IMR-90 (cell line): ENCODE measurements at regions of chr3 and their contacts with region 1.

Region 1: GRCh38 chr3:73255609-73256029 is 194.2 kb downstream of the EBLN2 start:
- DNase-seq: peak; percentile 66
- ATAC-seq: no peak
- H3K4me3 ChIP-seq: no peak overlapping the region
- H3K27ac ChIP-seq: no peak overlapping the region
- H3K4me1 ChIP-seq: no peaks in the 10 kb centered on the region
- H3K27me3 ChIP-seq: peaks cover 2% of the 10 kb centered on the region; the same call in 1 of the 2 replicates
- CTCF ChIP-seq: no peak
- POLR2A ChIP-seq: no peak
- RAD21 ChIP-seq: no peak

Region 2: GRCh38 chr3:72847751-72848702 is 407.6 kb before region 1 on chr3 and contains the start of gene SHQ1:
- CTCF ChIA-PET with region 1: no interaction called
- POLR2A ChIA-PET with region 1: no interaction called
- dilution Hi-C with region 1: no loop called
- in situ Hi-C with region 1: no loop called
- intact Hi-C with region 1: no loop called
- DNase-seq: peak; percentile 93
- ATAC-seq: peak; percentile 88
- H3K4me3 ChIP-seq: peak within 1 kb of the TSS; percentile 90
- H3K27ac ChIP-seq: peak within 1 kb of the TSS; percentile 65
- H3K4me1 ChIP-seq: no peaks in the 10 kb centered on the region; the same call in 1 of the 2 replicates
- H3K27me3 ChIP-seq: no peaks in the 10 kb centered on the region
- CTCF ChIP-seq: no peak
- POLR2A ChIP-seq: peak; percentile 31; the same call in 1 of the 2 replicates
- RAD21 ChIP-seq: no peak; the same call in 1 of the 2 replicates
- total RNA-seq, gene SHQ1: 19.4 and 28.6 TPM in 2 replicates

Region 3: DNA sequence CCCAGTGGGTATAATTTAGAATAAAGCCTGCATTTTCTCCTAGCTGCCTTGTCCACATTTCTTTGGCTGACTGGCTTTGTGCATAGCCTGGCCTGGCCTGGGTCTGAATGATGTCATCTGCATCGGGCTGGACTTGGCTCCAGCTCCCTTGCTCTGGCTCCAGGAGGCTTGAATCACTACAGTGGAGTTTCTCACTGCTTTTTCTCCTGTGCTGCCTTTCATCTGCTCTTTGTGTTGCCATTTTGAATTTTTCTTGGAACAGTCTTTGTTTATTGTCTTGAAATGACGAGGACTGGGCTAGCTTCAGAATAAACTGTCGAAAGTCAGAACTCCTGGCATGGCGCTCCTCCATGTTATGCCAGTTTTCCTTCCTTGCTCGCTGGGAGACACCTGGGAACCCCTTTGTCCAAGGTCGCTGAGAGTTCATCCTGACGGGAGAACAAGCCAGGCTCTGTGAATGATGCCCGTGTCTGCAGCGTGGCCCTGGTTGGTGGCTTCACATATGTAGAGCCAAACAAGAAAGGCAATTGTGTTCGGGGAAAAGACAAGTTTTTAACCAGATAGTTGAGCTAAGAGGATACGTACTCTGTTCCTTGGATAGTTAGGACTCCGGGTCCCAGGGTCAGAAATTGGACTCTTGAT is 110.3 kb after region 1 on chr3:
- CTCF ChIA-PET with region 1: no interaction called
- POLR2A ChIA-PET with region 1: no interaction called
- dilution Hi-C with region 1: no loop called
- in situ Hi-C with region 1: loop called (anchors 25 kb)
- intact Hi-C with region 1: no loop called
- DNase-seq: peak; percentile 71
- ATAC-seq: peak; percentile 98
- H3K4me3 ChIP-seq: no peak overlapping the region
- H3K27ac ChIP-seq: no peak overlapping the region
- H3K4me1 ChIP-seq: no peaks in the 10 kb centered on the region
- H3K27me3 ChIP-seq: no peaks in the 10 kb centered on the region
- CTCF ChIP-seq: no peak
- POLR2A ChIP-seq: no peak
- RAD21 ChIP-seq: no peak